ENCODE measurements at regions of chr5 and their contacts with region 1.

Region 1: DNA sequence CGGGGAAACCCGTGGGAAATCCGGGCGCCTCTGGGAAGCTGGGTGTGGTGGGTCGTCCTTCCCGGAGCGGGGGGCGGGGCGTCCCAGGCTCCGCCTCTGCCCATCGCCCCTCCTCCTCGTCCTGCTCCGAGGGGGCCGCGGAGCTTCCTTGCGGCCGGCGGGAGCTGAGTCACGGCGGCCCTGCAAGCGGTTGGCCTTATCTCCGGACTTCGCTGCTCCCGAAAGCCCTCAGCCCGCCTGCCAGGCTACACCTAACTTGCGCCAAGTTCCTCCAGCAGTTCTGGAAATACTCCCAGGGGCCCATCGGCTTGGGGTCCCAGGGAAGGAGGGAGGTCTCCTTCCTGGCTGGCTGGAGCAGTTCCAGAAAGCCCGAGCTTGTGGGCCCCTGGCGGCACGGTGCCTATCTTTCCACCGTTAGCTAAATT is 54.1 kb upstream of the CDKN2AIPNL start:
- DNase-seq: peak; percentile 73
- H3K4me3 Mint-ChIP-seq: peak overlapping the region; percentile 81
- H3K27ac Mint-ChIP-seq: peak overlapping the region; percentile 81
- H3K4me1 Mint-ChIP-seq: peaks cover 19% of the 10 kb centered on the region
- H3K27me3 Mint-ChIP-seq: no peaks in the 10 kb centered on the region

Region 2: DNA sequence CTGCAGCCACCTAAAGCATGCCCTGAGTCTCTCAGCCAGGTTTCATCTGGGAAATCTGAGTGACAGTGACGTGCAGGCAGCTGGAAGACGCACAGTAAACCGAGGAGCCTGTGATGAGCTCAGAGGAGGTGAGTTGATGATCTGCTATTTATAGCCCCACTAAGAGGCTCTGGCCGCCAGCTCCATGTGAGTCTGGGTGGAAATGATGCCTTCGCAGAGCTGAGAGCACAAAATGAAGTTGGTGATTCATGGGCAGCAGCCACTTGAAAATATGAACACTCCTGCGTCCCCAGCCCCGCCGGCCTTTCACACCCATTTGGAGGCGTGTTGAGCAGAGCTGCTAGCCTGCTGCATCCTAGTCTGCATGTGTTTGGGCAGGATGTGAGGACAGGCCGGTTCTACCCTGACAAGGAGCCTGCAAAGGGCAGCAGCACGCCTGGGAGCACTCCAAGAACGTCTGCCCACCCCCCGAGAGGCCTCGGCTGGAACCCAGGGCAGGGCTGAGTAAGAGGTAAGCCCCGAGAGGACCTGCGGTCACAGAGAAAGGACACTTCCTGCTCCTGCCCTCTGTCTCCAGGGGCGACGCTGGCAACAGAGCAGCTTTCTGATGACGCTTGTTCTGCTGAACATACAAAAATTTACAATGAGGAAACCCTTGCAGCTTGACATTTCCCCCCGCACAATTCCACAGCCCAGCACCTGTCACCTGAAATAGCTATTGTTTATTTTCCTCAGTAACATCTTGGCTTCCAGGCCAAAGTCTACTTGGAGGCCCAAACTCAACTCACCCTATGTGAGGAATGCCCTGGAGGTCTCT is 29.1 kb before region 1 on chr5:
- CTCF ChIA-PET with region 1: no interaction called
- intact Hi-C with region 1: loop called (anchors 2 kb)
- DNase-seq: peak; percentile 80
- H3K4me3 Mint-ChIP-seq: peak overlapping the region; percentile 25
- H3K27ac Mint-ChIP-seq: no peak overlapping the region
- H3K4me1 Mint-ChIP-seq: peaks cover 32% of the 10 kb centered on the region
- H3K27me3 Mint-ChIP-seq: no peaks in the 10 kb centered on the region

Region 3: DNA sequence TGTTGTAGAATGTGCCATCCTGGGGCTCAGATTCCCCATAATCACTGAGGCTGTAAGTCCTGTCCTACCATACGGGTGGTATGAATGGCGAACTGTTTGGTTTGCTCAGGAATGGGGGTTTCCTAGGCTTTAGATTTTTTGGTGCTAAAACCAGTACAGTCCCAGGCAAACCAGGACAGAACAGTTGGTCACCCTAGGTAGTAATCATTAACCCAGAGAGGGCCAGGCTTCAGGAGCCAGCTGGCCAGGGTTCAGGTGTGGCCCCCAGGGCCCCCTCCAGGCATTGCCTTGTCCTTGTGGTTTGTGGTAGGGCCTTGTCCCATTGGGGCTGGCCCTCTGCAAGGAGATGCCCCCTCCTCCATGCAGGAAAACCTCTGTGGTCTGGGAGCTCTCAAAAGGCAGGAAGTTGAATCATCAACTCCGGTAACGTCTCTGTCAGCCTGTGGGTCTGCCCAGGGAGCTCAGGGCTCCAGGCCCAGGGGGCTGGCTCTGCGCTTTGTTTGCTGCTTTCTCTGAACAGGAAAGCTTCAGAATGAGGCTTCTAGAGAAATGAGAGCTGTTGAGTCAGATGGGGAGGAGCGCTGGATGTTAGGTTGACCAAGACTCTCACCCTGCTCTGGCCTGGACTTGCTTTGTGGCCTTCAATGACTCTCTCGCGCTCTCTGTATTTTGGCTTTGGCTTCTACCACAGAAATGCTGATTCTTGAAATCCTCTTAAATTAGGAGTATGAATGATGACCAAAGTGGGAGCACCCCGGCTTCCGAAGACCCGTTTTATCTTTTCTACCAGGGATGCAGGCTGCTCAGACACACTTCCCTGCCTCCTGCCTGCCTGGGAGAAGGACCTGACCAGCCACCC is 37.5 kb after region 1 on chr5:
- CTCF ChIA-PET with region 1: no interaction called
- intact Hi-C with region 1: loop called (anchors 1 kb)
- DNase-seq: peak; percentile 91
- H3K4me3 Mint-ChIP-seq: peak overlapping the region; percentile 30
- H3K27ac Mint-ChIP-seq: peak overlapping the region; percentile 92
- H3K4me1 Mint-ChIP-seq: peaks cover 33% of the 10 kb centered on the region
- H3K27me3 Mint-ChIP-seq: no peaks in the 10 kb centered on the region

Measured in activated naive CD4-positive, alpha-beta T cell treated with anti-CD3 and anti-CD28 coated beads for 36 hours (primary cell).